ENCODE measurements at regions of chrX and their contacts with region 1.

Region 1: GRCh38 chrX:109384699-109385098 is 97.2 kb downstream of the GUCY2F start:
- DNase-seq: no peak
- H3K4me3 ChIP-seq: no peak overlapping the region
- H3K27ac ChIP-seq: no peak overlapping the region
- H3K4me1 ChIP-seq: no peaks in the 10 kb centered on the region
- H3K27me3 ChIP-seq: no peaks in the 10 kb centered on the region
- CTCF ChIP-seq: peak in 2 of 3 experiments; percentile 29 to 31; a peak in 2 of 4 replicates
- EP300 ChIP-seq: no peak
- POLR2A ChIP-seq: no peak
- RAD21 ChIP-seq: peak; percentile 60 to 68

Region 2: GRCh38 chrX:109049902-109050301 is 334.8 kb before region 1 on chrX:
- CTCF ChIA-PET with region 1: interaction called, 20 read pairs
- POLR2A ChIA-PET with region 1: no interaction called
- DNase-seq: no peak
- H3K4me3 ChIP-seq: no peak overlapping the region
- H3K27ac ChIP-seq: no peak overlapping the region
- H3K4me1 ChIP-seq: no peaks in the 10 kb centered on the region
- H3K27me3 ChIP-seq: no peaks in the 10 kb centered on the region
- CTCF ChIP-seq: peak; percentile 35 to 56 (median 53)
- EP300 ChIP-seq: no peak
- POLR2A ChIP-seq: no peak
- RAD21 ChIP-seq: peak; percentile 69 to 80

Measured in H1 (cell line).